Ascending aorta (tissue), 2 donors: ENCODE measurements at regions of chr17 and their contacts with region 1.

Region 1: DNA sequence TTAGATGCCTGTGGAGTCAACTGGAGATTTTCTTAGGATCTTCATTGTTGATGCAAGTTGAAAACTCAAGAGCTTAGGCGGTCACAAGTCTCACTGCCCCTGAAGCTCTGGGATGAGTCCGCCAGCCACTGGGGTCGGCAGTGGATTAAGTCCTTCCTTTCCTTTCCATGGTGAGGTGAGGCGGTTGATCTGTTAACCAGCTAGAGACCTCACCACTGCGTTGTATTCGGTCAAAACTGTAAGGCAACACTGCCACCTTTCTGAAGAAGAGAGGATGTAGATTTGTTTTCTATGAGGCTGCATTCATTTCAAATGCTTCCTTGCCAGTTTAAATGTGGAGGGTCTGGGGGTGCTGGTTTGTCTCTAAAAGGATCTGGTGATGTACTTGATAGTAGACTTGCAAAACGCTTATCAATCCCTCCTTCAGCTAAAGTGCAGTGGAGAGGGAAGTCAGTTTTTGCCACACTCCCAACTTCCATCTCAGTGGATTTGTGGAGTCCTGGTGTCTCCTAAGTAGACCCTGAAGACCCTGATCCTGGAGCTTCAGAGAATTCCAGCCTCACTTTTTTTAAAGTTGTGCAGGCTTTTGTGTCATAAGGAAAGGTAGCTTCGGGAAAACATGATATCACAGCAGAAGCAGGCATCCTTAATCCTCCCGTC is 1.7 kb downstream of the MYOCD start:
- DNase-seq: peak in 1 of 2 donors; percentile 81
- H3K4me3 ChIP-seq: peak overlapping the region; percentile 80 to 84
- H3K27ac ChIP-seq: peak overlapping the region; percentile 93 to 98
- H3K4me1 ChIP-seq: peaks cover 0 to 15% of the 10 kb centered on the region in 2 donors
- H3K27me3 ChIP-seq: no peaks in the 10 kb centered on the region
- CTCF ChIP-seq: peak; percentile 53 to 74 (median 62)

Region 2: DNA sequence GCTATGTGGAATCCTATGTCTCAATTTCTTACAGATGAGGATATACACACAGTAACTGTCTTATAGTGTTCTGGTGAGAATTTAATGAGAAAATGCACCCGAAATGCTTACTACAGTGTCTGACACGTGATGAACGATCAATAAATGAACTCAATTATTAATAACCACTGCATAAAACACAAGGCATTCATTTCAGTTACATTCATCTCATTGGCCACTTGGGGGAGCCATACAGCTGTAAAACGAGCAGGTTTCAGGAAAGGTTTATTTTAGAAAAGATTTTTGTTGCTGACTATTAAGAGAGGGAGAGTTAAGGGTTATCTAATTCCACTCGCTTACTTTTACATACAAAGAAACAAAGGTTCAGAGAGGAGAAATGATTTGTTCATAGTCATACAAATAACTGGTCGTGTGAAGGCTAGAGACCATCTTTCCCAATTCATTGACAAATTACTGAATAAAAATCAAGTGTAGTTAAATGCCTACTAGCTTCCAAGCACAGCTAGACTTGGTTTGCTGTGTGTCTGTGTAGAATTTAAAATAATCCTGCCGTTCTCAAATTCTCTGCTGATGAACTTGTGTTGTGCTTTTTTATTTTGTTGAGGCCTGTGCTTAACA is 486.7 kb before region 1 on chr17:
- intact Hi-C with region 1: loop called (anchors 1 kb)
- DNase-seq: no peak
- H3K4me3 ChIP-seq: peak overlapping the region in 1 of 2 donors; percentile 28
- H3K27ac ChIP-seq: peak overlapping the region in 1 of 2 donors; percentile 58
- H3K4me1 ChIP-seq: peaks cover 0 to 5% of the 10 kb centered on the region in 2 donors
- H3K27me3 ChIP-seq: no peaks in the 10 kb centered on the region
- CTCF ChIP-seq: peak; percentile 58 to 79 (median 76)

Region 3: GRCh38 chr17:12545877-12546513 is 121.4 kb before region 1 on chr17:
- intact Hi-C with region 1: loop called (anchors 1 kb)
- DNase-seq: no peak
- H3K4me3 ChIP-seq: no peak overlapping the region
- H3K27ac ChIP-seq: no peak overlapping the region
- H3K4me1 ChIP-seq: peaks cover 0 to 5% of the 10 kb centered on the region in 2 donors
- H3K27me3 ChIP-seq: no peaks in the 10 kb centered on the region
- CTCF ChIP-seq: peak; percentile 59 to 84 (median 78)

Region 4: DNA sequence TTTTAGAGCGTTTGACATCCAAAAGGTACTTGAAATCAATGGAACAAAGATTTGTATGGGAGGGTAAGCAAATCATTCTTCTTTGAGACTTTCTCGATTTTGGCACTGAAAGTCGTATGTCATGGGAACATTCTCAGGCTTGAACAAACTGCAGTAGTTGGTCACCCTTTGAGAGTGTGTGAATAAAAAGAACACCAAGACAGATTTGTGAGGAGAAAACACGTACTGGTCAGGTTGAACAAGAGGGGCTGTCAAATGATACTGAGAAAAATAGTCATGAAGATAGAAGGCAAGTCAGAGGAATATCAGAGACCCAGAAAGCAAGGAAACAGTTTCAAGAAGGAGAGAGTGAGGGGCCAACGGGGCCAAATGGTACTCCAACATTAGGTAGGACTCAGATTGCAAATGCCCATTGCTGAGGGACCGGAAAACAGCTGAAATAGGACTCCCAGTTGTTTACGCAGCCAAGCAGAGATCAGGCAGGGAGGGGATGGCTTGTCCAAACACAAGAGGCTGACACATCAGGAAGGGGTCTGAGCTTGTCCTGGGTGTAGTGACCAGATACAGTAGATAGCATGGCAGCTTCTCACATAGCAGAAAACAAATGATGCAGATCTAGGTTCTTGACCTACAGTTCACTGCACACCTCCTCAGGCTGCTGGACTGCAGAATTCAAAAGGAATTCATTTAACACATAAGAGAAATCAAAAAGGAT is 76.3 kb before region 1 on chr17:
- intact Hi-C with region 1: no loop called
- DNase-seq: no peak
- H3K4me3 ChIP-seq: no peak overlapping the region
- H3K27ac ChIP-seq: peak overlapping the region in 1 of 2 donors; percentile 16
- H3K4me1 ChIP-seq: no peaks in the 10 kb centered on the region
- H3K27me3 ChIP-seq: no peaks in the 10 kb centered on the region
- CTCF ChIP-seq: no peak

Region 5: DNA sequence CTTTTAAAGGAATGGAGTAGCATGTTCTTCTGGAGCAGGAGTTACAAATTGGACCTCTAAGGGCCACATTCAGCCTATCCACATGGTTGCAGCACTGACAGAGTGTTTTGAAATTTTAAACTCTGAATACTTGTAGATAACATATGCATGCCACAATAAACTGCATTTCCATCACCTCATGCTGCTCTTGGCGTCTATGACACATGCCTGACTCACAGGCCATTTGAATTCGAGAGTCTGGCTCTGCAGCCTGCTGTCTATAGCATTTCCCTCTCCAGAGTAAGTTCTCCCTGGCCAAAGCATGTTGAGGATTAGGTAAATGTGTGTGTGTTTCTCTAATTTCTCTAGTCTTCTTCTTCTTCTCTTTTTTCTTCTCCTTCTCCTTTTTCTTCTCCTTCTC is 30.4 kb before region 1 on chr17:
- intact Hi-C with region 1: loop called (anchors 1 kb)
- DNase-seq: peak; percentile 38 to 90
- H3K4me3 ChIP-seq: no peak overlapping the region
- H3K27ac ChIP-seq: peak overlapping the region; percentile 81 to 88
- H3K4me1 ChIP-seq: peaks cover 5 to 18% of the 10 kb centered on the region in 2 donors
- H3K27me3 ChIP-seq: no peaks in the 10 kb centered on the region
- CTCF ChIP-seq: no peak

Region 6: GRCh38 chr17:12691182-12691581 is 23.8 kb after region 1 on chr17:
- intact Hi-C with region 1: no loop called
- DNase-seq: peak; percentile 48 to 94
- H3K4me3 ChIP-seq: no peak overlapping the region
- H3K27ac ChIP-seq: peak overlapping the region; percentile 93
- H3K4me1 ChIP-seq: peaks cover 10 to 41% of the 10 kb centered on the region in 2 donors
- H3K27me3 ChIP-seq: no peaks in the 10 kb centered on the region
- CTCF ChIP-seq: no peak

Region 7: GRCh38 chr17:12744298-12744697 is 76.9 kb after region 1 on chr17:
- intact Hi-C with region 1: loop called (anchors 2 kb)
- DNase-seq: no peak
- H3K4me3 ChIP-seq: no peak overlapping the region
- H3K27ac ChIP-seq: peak overlapping the region; percentile 46 to 49
- H3K4me1 ChIP-seq: peaks cover 0 to 11% of the 10 kb centered on the region in 2 donors
- H3K27me3 ChIP-seq: no peaks in the 10 kb centered on the region
- CTCF ChIP-seq: no peak